Right ventricle myocardium superior (tissue), 1 donor: ENCODE measurements at regions of chr10 and their contacts with region 1.

Region 1: DNA sequence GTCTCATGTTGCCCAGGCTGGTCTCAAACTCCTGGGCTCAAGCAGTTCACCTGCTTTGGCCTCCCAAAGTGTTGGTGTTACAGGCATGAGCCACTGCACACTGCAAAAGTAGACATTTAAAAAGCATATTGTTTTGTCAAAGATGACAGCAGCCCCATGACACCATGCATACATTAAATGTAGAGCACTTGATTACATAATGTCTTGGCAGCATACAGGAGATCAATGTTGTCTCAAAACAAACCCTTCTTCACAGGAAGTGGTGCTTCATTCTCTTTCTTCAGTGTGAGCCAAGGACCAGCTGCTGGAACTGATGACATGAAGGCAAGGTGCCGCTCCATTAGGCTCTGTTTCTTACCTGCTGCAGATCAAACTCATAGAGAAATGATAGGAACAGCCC is 218.4 kb downstream of the KLF6 start:
- DNase-seq: no peak
- ATAC-seq: no peak

Region 2: DNA sequence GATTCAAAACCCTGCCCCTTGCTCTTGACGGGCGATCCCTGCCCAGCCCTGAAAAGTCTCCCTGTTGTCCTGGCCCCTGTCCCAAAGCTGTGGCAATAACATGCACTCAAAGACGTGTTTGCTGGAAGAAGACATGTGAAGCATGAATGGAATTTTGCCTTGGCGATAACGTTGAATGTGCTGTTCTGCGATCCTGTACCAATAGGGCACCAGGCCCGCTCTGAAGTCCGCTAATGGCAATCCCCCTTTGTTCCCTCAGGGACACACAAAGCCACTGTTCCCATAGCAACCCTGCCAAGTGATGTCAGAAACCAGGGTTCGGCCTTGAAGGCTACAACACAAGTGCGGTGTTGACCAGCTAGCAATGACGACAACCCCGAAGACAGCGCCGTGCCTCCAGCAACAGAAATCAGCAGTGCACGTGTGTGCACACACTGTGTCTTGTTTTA is 66.2 kb before region 1 on chr10:
- intact Hi-C with region 1: loop called (anchors 10 kb)
- DNase-seq: peak; percentile 80
- ATAC-seq: peak; percentile 92

Region 3: GRCh38 chr10:3692387-3692999 is 125.9 kb after region 1 on chr10:
- intact Hi-C with region 1: no loop called
- DNase-seq: no peak
- ATAC-seq: peak; percentile 43